ENCODE measurements at regions of chr12 and their contacts with region 1.

Region 1: DNA sequence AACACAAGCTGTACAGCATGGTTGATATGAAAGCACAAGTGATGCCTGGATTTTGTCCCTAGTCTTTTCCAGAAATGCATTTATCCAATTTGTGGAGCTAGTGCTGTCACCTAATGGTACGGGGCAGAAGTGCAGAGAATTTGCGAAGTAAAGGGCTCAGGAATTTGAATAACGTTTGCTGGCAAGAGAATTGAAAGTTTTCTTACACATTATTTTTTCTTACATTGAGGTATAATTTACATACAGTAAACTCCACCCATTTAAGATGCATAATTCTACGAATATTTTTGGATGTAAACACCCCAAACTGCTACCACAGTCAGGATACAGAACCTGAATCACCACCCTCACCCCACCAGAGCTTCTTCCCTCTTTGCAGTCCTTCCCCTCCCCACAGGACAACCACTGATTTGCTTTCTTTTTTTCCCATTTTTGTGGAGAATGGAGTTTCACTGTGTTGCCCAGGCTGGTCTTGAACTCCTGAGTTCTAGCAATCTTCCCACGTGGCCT is 3.5 kb downstream of the AICDA start:
- DNase-seq: peak; percentile 32
- ATAC-seq: peak; percentile 56; the same call in 1 of the 2 replicates
- H3K4me3 ChIP-seq: peak overlapping the region in 1 of 2 experiments; percentile 23; a peak in 1 of 4 replicates
- H3K27ac ChIP-seq: no peak overlapping the region
- H3K4me1 ChIP-seq: no peaks in the 10 kb centered on the region
- H3K27me3 ChIP-seq: no peaks in the 10 kb centered on the region; the same call in 1 of the 2 replicates
- CTCF ChIP-seq: peak; percentile 81

Region 2: GRCh38 chr12:8420506-8420905 is 188.6 kb before region 1 on chr12:
- CTCF ChIA-PET with region 1: no interaction called
- POLR2A ChIA-PET with region 1: no interaction called
- in situ Hi-C with region 1: no loop called
- intact Hi-C with region 1: no loop called
- DNase-seq: no peak
- ATAC-seq: no peak
- H3K4me3 ChIP-seq: no peak overlapping the region
- H3K27ac ChIP-seq: no peak overlapping the region
- H3K4me1 ChIP-seq: no peaks in the 10 kb centered on the region
- H3K27me3 ChIP-seq: no peaks in the 10 kb centered on the region
- CTCF ChIP-seq: no peak

Region 3: DNA sequence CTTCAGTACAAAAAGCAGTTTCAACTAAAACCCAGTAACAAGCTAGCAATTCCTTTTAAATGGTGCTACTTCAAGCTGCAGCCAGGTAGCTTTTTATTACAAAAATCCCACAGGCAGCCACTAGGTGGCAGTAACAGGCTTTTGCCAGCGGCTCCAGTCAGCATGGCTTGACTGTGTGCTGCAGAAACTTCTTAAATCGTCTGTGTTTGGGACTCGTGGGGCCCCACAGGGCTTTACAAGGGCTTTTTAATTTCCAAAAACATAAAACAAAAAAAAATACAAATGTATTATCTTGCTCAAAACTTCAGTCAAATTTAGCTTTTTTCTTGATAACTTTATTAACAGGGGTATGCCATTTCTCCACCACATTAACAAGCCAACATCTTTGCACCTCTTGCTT is 64.8 kb before region 1 on chr12:
- CTCF ChIA-PET with region 1: interaction called, 16 read pairs
- POLR2A ChIA-PET with region 1: no interaction called
- in situ Hi-C with region 1: no loop called
- intact Hi-C with region 1: loop called (anchors 2 kb)
- DNase-seq: peak; percentile 35
- ATAC-seq: peak; percentile 79
- H3K4me3 ChIP-seq: no peak overlapping the region
- H3K27ac ChIP-seq: no peak overlapping the region
- H3K4me1 ChIP-seq: no peaks in the 10 kb centered on the region
- H3K27me3 ChIP-seq: no peaks in the 10 kb centered on the region; the same call in none of the 2 replicates
- CTCF ChIP-seq: peak; percentile 90

Region 4: GRCh38 chr12:8662593-8662992 is 53.5 kb after region 1 on chr12 and contains the start of gene MFAP5:
- CTCF ChIA-PET with region 1: interaction called, 12 read pairs
- POLR2A ChIA-PET with region 1: no interaction called
- in situ Hi-C with region 1: no loop called
- intact Hi-C with region 1: no loop called
- DNase-seq: no peak
- ATAC-seq: no peak
- H3K4me3 ChIP-seq: no peak within 1 kb of the TSS
- H3K27ac ChIP-seq: no peak within 1 kb of the TSS
- H3K4me1 ChIP-seq: no peaks in the 10 kb centered on the region
- H3K27me3 ChIP-seq: no peaks in the 10 kb centered on the region; the same call in 1 of the 2 replicates
- CTCF ChIP-seq: no peak
- total RNA-seq, gene MFAP5: not detected

Region 5: GRCh38 chr12:8996682-8997360 is 387.7 kb after region 1 on chr12:
- CTCF ChIA-PET with region 1: no interaction called
- POLR2A ChIA-PET with region 1: no interaction called
- in situ Hi-C with region 1: no loop called
- intact Hi-C with region 1: no loop called
- DNase-seq: no peak
- ATAC-seq: no peak
- H3K4me3 ChIP-seq: no peak overlapping the region
- H3K27ac ChIP-seq: no peak overlapping the region
- H3K4me1 ChIP-seq: no peaks in the 10 kb centered on the region
- H3K27me3 ChIP-seq: no peaks in the 10 kb centered on the region
- CTCF ChIP-seq: no peak

Measured in Panc1 (cell line).